ENCODE measurements at regions of chr4 and their contacts with region 1.

Region 1: DNA sequence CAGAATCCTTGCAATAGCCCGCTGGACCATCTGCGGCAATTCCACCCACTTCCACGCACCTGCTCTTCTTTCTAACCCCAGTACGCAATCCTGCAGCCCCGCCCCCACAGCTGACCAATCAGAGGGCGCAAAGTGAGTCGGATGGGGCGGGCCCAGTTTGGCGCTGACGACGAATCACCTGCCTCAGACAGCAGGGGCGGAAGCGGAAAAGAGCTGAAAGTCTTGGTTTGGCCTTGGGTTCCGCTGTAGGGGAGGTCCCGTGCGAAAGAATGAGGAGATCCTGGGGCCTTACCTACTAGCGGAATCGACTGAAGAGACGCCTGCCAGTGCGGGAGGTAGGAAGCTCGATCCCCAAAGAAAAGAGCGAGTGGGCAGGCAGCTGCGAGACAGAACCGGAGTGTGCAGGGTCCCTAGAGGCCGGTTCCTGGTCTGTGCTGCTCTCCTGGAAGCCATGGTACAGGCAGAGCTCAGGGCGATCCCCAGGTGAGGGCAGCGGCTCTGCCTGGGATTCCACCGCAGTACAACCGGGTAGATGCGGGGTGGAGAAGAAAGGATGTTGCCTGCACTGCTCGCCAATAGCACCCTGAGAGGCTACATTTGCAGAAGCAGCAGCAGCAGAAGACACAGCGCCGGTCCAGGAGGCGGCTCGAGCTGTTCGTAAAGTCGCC is at the start of gene TMEM184C:
- DNase-seq: peak; percentile 97
- H3K4me3 ChIP-seq: peak within 1 kb of the TSS; percentile 72
- H3K4me3 Mint-ChIP-seq: peak within 1 kb of the TSS; percentile 99
- H3K27ac Mint-ChIP-seq: peak within 1 kb of the TSS; percentile 97
- H3K4me1 ChIP-seq: peaks cover 5% of the 10 kb centered on the region
- H3K4me1 Mint-ChIP-seq: peaks cover 11% of the 10 kb centered on the region
- H3K27me3 ChIP-seq: no peaks in the 10 kb centered on the region
- H3K27me3 Mint-ChIP-seq: no peaks in the 10 kb centered on the region
- CTCF ChIP-seq: peak in 1 of 2 experiments; percentile 1
- total RNA-seq, gene TMEM184C: 36.2 and 38.1 TPM in 2 replicates

Region 2: GRCh38 chr4:147683717-147684700 is 66.7 kb after region 1 on chr4 and contains the start of gene PRMT9:
- CTCF ChIA-PET with region 1: interaction called, 4 read pairs
- POLR2A ChIA-PET with region 1: interaction called, 14 read pairs
- intact Hi-C with region 1: loop called (anchors 5 kb)
- DNase-seq: peak; percentile 91 to 92
- H3K4me3 ChIP-seq: peak within 1 kb of the TSS; percentile 74
- H3K4me3 Mint-ChIP-seq: peak within 1 kb of the TSS; percentile 90
- H3K27ac Mint-ChIP-seq: peak within 1 kb of the TSS; percentile 85
- H3K4me1 ChIP-seq: peaks cover 8% of the 10 kb centered on the region
- H3K4me1 Mint-ChIP-seq: no peaks in the 10 kb centered on the region
- H3K27me3 ChIP-seq: no peaks in the 10 kb centered on the region
- H3K27me3 Mint-ChIP-seq: no peaks in the 10 kb centered on the region
- CTCF ChIP-seq: no peak
- total RNA-seq, gene PRMT9: 7.5 and 8.6 TPM in 2 replicates